Posterior cingulate gyrus (tissue), 11 donors: ENCODE measurements at regions of chr18 and their contacts with region 1.

Region 1: DNA sequence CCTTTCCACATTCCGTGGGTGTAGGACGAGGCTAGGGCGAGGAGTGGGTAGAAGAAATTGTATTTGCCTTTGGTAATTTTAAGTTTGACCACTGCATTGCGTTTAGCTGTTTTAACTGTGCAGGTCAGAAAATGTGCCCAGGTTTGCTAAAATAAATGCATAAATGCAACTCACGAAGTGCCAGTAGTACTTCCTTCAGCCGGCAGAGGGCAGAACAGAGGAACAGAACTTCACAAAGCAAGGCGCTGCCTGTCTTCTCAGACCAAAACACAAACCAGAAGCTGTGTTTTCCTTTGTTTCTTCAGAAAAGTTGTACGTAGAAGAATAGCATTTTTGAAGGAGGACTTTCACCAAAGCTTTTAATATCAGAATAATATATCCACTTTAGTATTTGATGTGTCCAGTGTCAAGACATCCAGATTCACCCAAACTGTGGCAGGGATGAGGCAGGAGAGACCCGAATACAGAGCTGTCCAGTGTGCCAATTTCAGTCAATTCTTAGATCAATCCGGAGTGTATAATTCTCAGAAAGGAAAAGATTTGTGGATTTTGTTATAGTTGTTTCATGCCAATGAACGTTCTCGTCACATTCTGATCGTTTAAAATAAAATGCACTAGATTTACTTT is 348.6 kb downstream of the DLGAP1 start:
- DNase-seq: peak; percentile 54 to 95 (median 82)

Region 2: DNA sequence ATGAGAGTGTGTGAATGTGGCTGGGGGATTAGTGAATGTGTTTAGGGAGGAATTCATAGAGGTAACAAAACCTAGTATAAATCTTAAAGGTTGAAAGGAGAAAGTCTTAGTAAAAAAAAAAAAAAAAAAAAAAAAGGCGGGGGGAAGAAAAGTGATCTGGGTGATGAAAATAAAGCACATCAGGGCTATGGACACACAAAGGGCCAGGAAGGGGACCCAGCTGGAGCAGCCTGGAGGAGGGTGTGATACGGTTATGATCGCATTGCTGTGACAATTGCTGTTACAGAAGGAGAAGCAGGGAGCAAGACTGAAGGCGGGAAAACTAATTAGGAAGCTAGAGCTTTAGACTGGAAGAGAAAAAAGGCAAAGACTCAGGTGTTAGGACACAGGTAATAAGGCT is 263.2 kb after region 1 on chr18:
- intact Hi-C with region 1: no loop called
- DNase-seq: no peak

Region 3: GRCh38 chr18:5057386-5058348 is 951.1 kb after region 1 on chr18:
- intact Hi-C with region 1: loop called (anchors 2 kb)
- DNase-seq: peak; percentile 24 to 95 (median 60)